Transverse colon (tissue), 4 donors: ENCODE measurements at regions of chr20 and their contacts with region 1.

Region 1: GRCh38 chr20:40511478-40511877 is 177.6 kb downstream of the MAFB start:
- DNase-seq: no peak
- H3K4me3 ChIP-seq: no peak overlapping the region
- H3K27ac ChIP-seq: no peak overlapping the region
- H3K4me1 ChIP-seq: no peaks in the 10 kb centered on the region
- H3K27me3 ChIP-seq: no peaks in the 10 kb centered on the region
- CTCF ChIP-seq: no peak
- EP300 ChIP-seq: no peak
- POLR2A ChIP-seq: no peak

Region 2: DNA sequence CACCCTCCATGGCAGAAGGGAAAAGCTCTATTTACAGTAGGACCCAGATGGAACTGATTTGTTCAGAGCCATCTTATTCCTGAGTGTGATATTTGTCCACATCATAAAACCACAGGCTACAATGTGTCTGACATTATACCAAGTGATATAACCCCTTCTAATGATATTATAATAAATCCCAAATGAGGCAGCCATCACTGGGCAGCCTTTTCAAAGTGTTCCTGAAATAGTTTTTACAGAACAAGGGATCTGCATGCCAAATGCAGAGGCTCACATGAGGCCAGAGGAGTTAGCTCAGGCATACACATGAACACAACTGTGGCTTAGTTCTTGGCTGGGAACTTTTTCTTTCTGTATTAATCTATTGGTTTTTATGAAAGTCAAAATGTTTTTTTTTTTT is 30.1 kb before region 1 on chr20:
- in situ Hi-C with region 1: no loop called
- intact Hi-C with region 1: no loop called
- DNase-seq: no peak
- H3K4me3 ChIP-seq: no peak overlapping the region
- H3K27ac ChIP-seq: no peak overlapping the region
- H3K4me1 ChIP-seq: no peaks in the 10 kb centered on the region
- H3K27me3 ChIP-seq: no peaks in the 10 kb centered on the region
- CTCF ChIP-seq: no peak
- EP300 ChIP-seq: no peak
- POLR2A ChIP-seq: no peak

Region 3: GRCh38 chr20:40571639-40572038 is 60.2 kb after region 1 on chr20:
- in situ Hi-C with region 1: no loop called
- intact Hi-C with region 1: loop called (anchors 10 kb)
- DNase-seq: no peak
- H3K4me3 ChIP-seq: no peak overlapping the region
- H3K27ac ChIP-seq: peak overlapping the region in 2 of 4 donors; percentile 25 to 29
- H3K4me1 ChIP-seq: no peaks in the 10 kb centered on the region
- H3K27me3 ChIP-seq: no peaks in the 10 kb centered on the region
- CTCF ChIP-seq: no peak
- EP300 ChIP-seq: no peak
- POLR2A ChIP-seq: no peak